ENCODE measurements at regions of chr15 and their contacts with region 1.

Region 1: GRCh38 chr15:43791993-43792760 is at the start of gene SERF2:
- DNase-seq: peak; percentile 100
- ATAC-seq: peak; percentile 96
- H3K4me3 Mint-ChIP-seq: peak within 1 kb of the TSS; percentile 96
- H3K27ac Mint-ChIP-seq: peak within 1 kb of the TSS; percentile 98
- H3K4me1 Mint-ChIP-seq: peaks cover 44% of the 10 kb centered on the region
- H3K27me3 Mint-ChIP-seq: no peaks in the 10 kb centered on the region
- total RNA-seq, gene SERF2: 1,025 to 1,042 TPM

Region 2: GRCh38 chr15:43749690-43750345 is 42.4 kb before region 1 on chr15:
- CTCF ChIA-PET with region 1: no interaction called
- POLR2A ChIA-PET with region 1: interaction called, 10 read pairs
- DNase-seq: peak; percentile 71
- ATAC-seq: peak; percentile 45
- H3K4me3 Mint-ChIP-seq: peak overlapping the region; percentile 74
- H3K27ac Mint-ChIP-seq: peak overlapping the region; percentile 93
- H3K4me1 Mint-ChIP-seq: peaks cover 40% of the 10 kb centered on the region
- H3K27me3 Mint-ChIP-seq: no peaks in the 10 kb centered on the region

Region 3: GRCh38 chr15:43824302-43825246 is 32.4 kb after region 1 on chr15 and contains the start of gene MFAP1:
- CTCF ChIA-PET with region 1: interaction called, 3 read pairs
- POLR2A ChIA-PET with region 1: interaction called, 11 read pairs
- DNase-seq: peak; percentile 96
- ATAC-seq: peak; percentile 82
- H3K4me3 Mint-ChIP-seq: peak within 1 kb of the TSS; percentile 89
- H3K27ac Mint-ChIP-seq: peak within 1 kb of the TSS; percentile 96
- H3K4me1 Mint-ChIP-seq: peaks cover 60% of the 10 kb centered on the region
- H3K27me3 Mint-ChIP-seq: no peaks in the 10 kb centered on the region
- total RNA-seq, gene MFAP1: 35.8 to 40.1 TPM